Dendritic cell treated with granulocyte-macrophage colony-stimulating factor and Interleukin-4, amounts not matched to agents 40 ng/mL and 50 ng/mL, for 4 days (primary cell): ENCODE measurements at regions of chr17 and their contacts with region 1.

Region 1: GRCh38 chr17:40443583-40444327 is 505 bp downstream of the IGFBP4 start:
- H3K4me3 Mint-ChIP-seq: peak overlapping the region; percentile 72
- H3K27ac Mint-ChIP-seq: peak overlapping the region; percentile 68
- H3K4me1 Mint-ChIP-seq: peaks cover 47% of the 10 kb centered on the region
- H3K27me3 Mint-ChIP-seq: peaks cover 47% of the 10 kb centered on the region

Region 2: GRCh38 chr17:40480501-40481003 is 36.8 kb after region 1 on chr17:
- intact Hi-C with region 1: loop called (anchors 1 kb)
- H3K4me3 Mint-ChIP-seq: peak overlapping the region; percentile 7
- H3K27ac Mint-ChIP-seq: no peak overlapping the region
- H3K4me1 Mint-ChIP-seq: peaks cover 31% of the 10 kb centered on the region
- H3K27me3 Mint-ChIP-seq: peaks cover 24% of the 10 kb centered on the region

Region 3: DNA sequence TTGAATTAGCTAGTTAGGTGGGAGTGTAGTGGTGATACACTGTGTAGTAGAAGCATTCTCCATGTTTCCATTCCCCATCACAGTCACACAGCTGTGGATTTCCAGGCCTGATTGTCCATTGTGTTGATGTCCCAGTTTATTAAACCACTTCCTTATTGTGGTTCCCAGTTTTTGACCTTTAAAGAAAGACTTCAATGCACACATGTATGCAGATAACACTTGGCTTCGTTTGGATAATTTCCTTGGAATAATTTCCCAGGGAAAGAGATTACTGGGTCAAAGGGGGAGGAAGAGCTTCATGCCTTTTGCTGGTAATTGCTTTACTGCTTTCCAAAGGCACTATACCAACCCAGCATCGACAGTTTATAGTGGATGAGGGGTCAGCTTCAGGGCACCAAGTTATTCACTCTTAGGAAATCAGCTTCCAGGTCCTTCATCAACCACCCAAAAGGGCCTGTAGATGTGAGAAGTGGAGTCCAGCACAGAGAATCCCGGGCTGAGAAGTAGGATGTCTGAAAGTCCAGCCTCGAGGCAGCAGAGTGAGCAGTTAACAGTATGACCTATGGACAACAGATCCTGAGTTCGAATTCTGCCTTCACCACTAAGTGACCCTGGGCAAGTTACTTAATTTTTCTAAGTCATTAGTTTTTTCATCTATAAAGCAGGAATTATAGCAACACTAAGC is 88.9 kb after region 1 on chr17:
- intact Hi-C with region 1: loop called (anchors 2 kb)
- H3K4me3 Mint-ChIP-seq: no peak overlapping the region
- H3K27ac Mint-ChIP-seq: no peak overlapping the region
- H3K4me1 Mint-ChIP-seq: peaks cover 22% of the 10 kb centered on the region
- H3K27me3 Mint-ChIP-seq: peaks cover 40% of the 10 kb centered on the region